ENCODE measurements at regions of chr7 and their contacts with region 1.

Region 1: GRCh38 chr7:10889266-10889898 is 84.3 kb upstream of the PHF14 start:
- DNase-seq: peak; percentile 55
- ATAC-seq: peak; percentile 95
- H3K4me3 Mint-ChIP-seq: no peak overlapping the region
- H3K27ac Mint-ChIP-seq: no peak overlapping the region
- H3K4me1 Mint-ChIP-seq: peaks cover 11% of the 10 kb centered on the region
- H3K27me3 Mint-ChIP-seq: no peaks in the 10 kb centered on the region
- CTCF ChIP-seq: peak; percentile 80

Region 2: DNA sequence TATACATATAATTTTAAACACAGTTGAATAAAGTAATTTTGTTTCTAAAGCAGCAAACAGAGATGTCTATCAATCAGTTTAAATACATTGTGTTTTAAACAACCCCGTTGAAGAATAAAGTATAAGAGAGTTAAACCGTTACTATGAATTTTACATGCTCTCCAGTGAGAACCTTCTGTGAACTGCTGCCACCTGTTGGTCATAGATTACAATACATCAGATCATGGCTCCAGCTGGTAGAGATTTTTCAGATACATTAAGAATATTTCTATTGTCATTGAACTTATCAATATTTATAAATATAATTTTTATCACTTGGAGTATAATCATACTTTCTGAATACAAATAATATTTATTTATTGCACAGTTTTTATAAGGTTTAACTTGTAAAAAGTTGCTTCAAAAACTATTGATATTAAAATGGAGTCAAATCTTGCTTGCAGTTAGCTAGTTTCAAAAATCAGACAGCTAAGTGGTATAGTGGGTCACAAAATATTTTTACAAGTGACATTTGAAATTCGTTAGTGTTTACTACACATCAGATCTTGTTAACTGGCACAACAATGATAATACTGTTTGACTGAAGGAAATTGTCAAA is 476.9 kb before region 1 on chr7:
- CTCF ChIA-PET with region 1: no interaction called
- POLR2A ChIA-PET with region 1: no interaction called
- intact Hi-C with region 1: loop called (anchors 10 kb)
- DNase-seq: peak; percentile 31
- ATAC-seq: peak; percentile 42
- H3K4me3 Mint-ChIP-seq: no peak overlapping the region
- H3K27ac Mint-ChIP-seq: no peak overlapping the region
- H3K4me1 Mint-ChIP-seq: no peaks in the 10 kb centered on the region
- H3K27me3 Mint-ChIP-seq: no peaks in the 10 kb centered on the region
- CTCF ChIP-seq: peak; percentile 63

Region 3: DNA sequence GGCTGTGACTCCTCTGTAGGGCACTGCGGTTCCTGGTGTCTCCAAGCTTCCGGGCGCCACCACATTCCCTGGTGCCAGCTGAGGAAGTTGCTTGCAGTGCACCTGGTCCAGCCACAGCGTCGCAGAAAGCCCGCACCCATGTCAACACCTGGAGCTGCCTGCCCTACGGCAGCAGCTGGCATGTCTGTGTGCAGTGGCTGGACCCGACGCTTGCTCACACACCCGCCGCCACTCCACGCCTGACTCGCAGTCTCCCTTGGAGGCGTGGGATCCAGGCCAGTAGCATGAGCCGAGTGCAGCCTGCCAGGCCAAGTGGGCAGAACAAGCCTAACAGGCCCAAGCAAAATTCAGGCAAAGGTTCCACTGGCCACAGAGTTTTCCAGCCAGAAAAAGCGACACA is 33.8 kb before region 1 on chr7:
- CTCF ChIA-PET with region 1: no interaction called
- POLR2A ChIA-PET with region 1: no interaction called
- intact Hi-C with region 1: no loop called
- DNase-seq: no peak
- ATAC-seq: no peak
- H3K4me3 Mint-ChIP-seq: no peak overlapping the region
- H3K27ac Mint-ChIP-seq: no peak overlapping the region
- H3K4me1 Mint-ChIP-seq: no peaks in the 10 kb centered on the region
- H3K27me3 Mint-ChIP-seq: peaks cover 3% of the 10 kb centered on the region
- CTCF ChIP-seq: no peak

Measured in activated CD8-positive, alpha-beta T cell treated with anti-CD3 and anti-CD28 coated beads for 36 hours (primary cell).